Activated CD4-positive, alpha-beta T cell treated with anti-CD3 and anti-CD28 coated beads for 36 hours (primary cell): ENCODE measurements at regions of chr17 and their contacts with region 1.

Region 1: DNA sequence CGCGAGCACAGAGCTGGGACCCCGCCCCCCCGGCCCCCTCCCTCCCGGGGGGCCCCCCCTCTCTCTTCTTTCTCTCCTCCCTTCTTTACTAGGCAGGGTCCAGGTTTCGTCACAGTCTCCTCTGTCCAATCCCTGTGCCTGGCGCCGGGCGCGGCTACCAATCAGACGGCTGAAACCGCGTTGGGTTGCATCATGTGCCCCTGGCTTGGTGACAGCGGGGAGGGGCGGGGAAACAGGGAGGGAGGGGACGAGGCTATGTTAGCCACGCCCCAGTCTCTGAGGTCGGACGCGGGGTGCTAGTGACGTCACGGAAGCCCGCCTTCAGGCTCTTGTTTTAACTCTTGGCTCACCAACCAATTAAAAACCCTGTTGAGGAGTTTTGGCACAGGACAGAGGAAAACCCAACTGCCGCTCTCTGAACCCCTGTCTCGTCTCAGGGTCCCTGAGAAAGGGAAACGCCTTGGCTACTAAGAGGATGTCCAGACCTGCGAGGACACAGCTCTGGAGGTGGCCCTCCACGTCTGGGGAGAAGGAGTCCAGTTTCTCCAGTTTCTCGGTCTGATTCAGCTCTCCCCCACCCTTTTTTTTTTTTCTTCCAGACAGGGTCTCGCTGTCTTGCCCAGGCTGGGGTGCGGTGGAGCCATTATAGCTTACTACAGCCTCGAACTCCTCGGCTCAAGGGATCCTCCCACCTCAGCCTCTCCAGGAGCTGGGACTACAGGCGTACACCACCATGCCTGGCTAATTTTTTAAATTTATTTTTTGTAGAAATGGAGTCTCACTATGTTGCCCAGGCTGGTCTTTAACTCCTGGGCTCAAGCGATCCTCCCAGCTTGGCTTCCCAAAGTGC is 439 bp upstream of the PLEKHH3 start:
- DNase-seq: peak; percentile 100
- ATAC-seq: peak; percentile 84
- H3K4me3 Mint-ChIP-seq: peak overlapping the region; percentile 70
- H3K27ac Mint-ChIP-seq: peak overlapping the region; percentile 69
- H3K4me1 Mint-ChIP-seq: peaks cover 49% of the 10 kb centered on the region
- H3K27me3 Mint-ChIP-seq: peaks cover 29% of the 10 kb centered on the region

Region 2: DNA sequence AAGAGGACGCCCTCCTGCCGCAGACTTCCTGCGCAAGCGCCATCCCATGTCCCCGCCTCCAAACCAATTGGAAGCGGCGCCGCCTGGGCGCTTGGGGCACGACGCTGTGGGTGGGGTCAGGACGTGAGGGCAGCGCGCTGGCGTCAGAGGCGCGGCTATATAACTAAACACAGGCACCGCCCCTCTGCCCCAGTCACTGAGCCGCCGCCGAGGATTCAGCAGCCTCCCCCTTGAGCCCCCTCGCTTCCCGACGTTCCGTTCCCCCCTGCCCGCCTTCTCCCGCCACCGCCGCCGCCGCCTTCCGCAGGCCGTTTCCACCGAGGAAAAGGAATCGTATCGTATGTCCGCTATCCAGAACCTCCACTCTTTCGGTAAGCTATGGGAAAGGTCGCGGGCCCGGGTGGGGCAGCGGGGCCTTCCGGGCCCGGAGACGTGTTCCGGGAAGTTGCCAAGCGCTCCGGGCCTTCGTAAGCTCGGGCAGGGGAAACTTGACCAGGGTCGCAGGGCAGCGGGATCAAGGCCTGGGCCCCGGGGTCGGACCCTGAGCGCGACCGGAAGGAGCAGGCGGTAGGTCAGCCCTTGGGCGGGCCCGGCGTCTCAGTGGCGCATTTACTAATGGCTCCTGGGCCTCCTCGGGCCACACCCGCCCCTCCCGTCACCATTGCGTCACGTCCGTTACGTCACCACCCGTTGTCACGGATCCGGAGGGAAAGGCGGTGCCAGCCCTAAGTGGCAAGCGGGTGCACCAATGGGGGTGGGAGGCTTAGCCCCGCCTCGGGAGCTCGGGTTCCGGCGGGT is 988.3 kb before region 1 on chr17 and contains the start of gene EIF1:
- CTCF ChIA-PET with region 1: no interaction called
- POLR2A ChIA-PET with region 1: no interaction called
- intact Hi-C with region 1: loop called in 1 of 2 experiments (anchors 1 kb)
- DNase-seq: peak; percentile 100
- ATAC-seq: peak; percentile 81
- H3K4me3 Mint-ChIP-seq: peak within 1 kb of the TSS; percentile 97
- H3K27ac Mint-ChIP-seq: peak within 1 kb of the TSS; percentile 95
- H3K4me1 Mint-ChIP-seq: peaks cover 20% of the 10 kb centered on the region
- H3K27me3 Mint-ChIP-seq: no peaks in the 10 kb centered on the region
- total RNA-seq, gene EIF1: 869 to 977 TPM

Region 3: DNA sequence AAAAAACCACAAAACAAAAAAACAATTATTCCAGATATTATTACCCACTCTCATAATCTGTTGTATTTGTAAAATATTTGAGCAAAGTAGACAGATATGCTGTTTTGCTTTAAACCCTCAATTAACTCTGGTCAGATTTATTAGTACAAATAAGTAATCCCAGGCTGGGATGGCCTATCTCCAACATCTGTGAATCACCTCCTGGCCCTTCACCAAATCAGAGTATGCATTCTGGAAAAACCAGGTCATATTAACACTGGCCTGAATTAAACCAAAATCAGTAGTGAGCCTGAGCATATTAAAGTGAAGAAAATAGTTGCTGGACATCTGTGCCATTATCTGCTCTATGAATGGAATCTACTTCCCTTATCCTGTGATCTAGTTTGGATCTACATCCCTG is 330.0 kb before region 1 on chr17:
- CTCF ChIA-PET with region 1: no interaction called
- POLR2A ChIA-PET with region 1: no interaction called
- intact Hi-C with region 1: loop called in 1 of 2 experiments (anchors 10 kb)
- DNase-seq: no peak
- ATAC-seq: no peak
- H3K4me3 Mint-ChIP-seq: no peak overlapping the region
- H3K27ac Mint-ChIP-seq: peak overlapping the region; percentile 41
- H3K4me1 Mint-ChIP-seq: peaks cover 57% of the 10 kb centered on the region
- H3K27me3 Mint-ChIP-seq: no peaks in the 10 kb centered on the region

Region 4: DNA sequence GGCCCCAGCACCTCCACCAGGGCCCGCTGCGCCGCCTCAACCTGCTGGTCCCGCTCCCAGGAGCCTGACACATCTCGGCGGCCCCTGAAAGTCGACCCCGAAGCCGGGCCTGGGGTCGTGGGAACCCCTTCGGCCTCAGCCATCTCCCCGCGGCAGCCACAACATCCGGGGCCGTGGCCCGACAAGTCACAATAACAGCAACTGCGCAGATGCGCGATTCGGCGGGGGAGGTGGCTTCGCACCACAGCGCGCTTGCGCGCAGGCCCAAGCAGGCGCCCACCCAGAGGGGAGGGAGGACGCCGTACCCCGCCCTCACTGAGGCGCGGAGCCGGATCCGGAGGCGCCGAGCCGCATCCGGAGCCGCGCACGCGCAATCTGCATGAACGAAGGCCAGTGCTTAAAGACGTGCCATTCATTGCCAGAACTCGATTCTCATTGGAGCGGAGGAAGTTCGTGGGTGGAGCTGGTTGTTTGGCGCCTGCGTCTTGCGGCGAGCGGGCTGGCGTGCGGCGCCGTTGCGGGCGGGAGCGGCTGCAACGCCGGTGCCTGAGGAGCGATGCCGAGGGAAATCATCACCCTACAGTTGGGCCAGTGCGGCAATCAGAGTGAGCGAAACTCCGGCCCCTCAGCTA is 67.9 kb before region 1 on chr17 and contains the starts of genes RETREG3 and TUBG1:
- CTCF ChIA-PET with region 1: interaction called, 8 read pairs
- POLR2A ChIA-PET with region 1: interaction called, 4 read pairs
- intact Hi-C with region 1: loop called (anchors 1 kb)
- DNase-seq: peak; percentile 100
- ATAC-seq: peak; percentile 92
- H3K4me3 Mint-ChIP-seq: peak within 1 kb of the TSS; percentile 95
- H3K27ac Mint-ChIP-seq: peak within 1 kb of the TSS; percentile 97
- H3K4me1 Mint-ChIP-seq: peaks cover 35% of the 10 kb centered on the region
- H3K27me3 Mint-ChIP-seq: no peaks in the 10 kb centered on the region
- total RNA-seq, gene RETREG3: 28.3 to 30.9 TPM
- total RNA-seq, gene TUBG1: 76.1 to 102 TPM

Region 5: GRCh38 chr17:42744806-42745617 is 67.8 kb after region 1 on chr17 and contains the start of gene EZH1:
- CTCF ChIA-PET with region 1: interaction called, 4 read pairs
- POLR2A ChIA-PET with region 1: no interaction called
- intact Hi-C with region 1: loop called in 1 of 2 experiments (anchors 1 kb)
- DNase-seq: peak; percentile 96
- ATAC-seq: peak; percentile 91
- H3K4me3 Mint-ChIP-seq: peak within 1 kb of the TSS; percentile 89
- H3K27ac Mint-ChIP-seq: peak within 1 kb of the TSS; percentile 98
- H3K4me1 Mint-ChIP-seq: peaks cover 19% of the 10 kb centered on the region
- H3K27me3 Mint-ChIP-seq: peaks cover 7% of the 10 kb centered on the region
- total RNA-seq, gene EZH1: 28.6 to 29.5 TPM

Region 6: GRCh38 chr17:42980398-42981397 is 303.5 kb after region 1 on chr17 and contains the start of gene RUNDC1:
- CTCF ChIA-PET with region 1: no interaction called
- POLR2A ChIA-PET with region 1: no interaction called
- intact Hi-C with region 1: loop called in 1 of 2 experiments (anchors 5 kb)
- DNase-seq: peak; percentile 95
- ATAC-seq: peak; percentile 87
- H3K4me3 Mint-ChIP-seq: peak within 1 kb of the TSS; percentile 99
- H3K27ac Mint-ChIP-seq: peak within 1 kb of the TSS; percentile 98
- H3K4me1 Mint-ChIP-seq: peaks cover 32% of the 10 kb centered on the region
- H3K27me3 Mint-ChIP-seq: no peaks in the 10 kb centered on the region
- total RNA-seq, gene RUNDC1: 12.3 to 12.5 TPM

Region 7: GRCh38 chr17:44123356-44124117 is 1446.3 kb after region 1 on chr17 and contains the start of gene HDAC5:
- CTCF ChIA-PET with region 1: no interaction called
- POLR2A ChIA-PET with region 1: no interaction called
- intact Hi-C with region 1: loop called in 1 of 2 experiments (anchors 5 kb)
- DNase-seq: peak; percentile 98
- ATAC-seq: peak; percentile 97
- H3K4me3 Mint-ChIP-seq: peak within 1 kb of the TSS; percentile 87
- H3K27ac Mint-ChIP-seq: peak within 1 kb of the TSS; percentile 97
- H3K4me1 Mint-ChIP-seq: peaks cover 22% of the 10 kb centered on the region
- H3K27me3 Mint-ChIP-seq: no peaks in the 10 kb centered on the region
- total RNA-seq, gene HDAC5: 16.5 to 22.0 TPM